ENCODE measurements at regions of chr12 and their contacts with region 1.

Region 1: GRCh38 chr12:114166362-114166761 is 200.2 kb upstream of the RBM19 start:
- DNase-seq: peak; percentile 29
- ATAC-seq: peak; percentile 71 to 74

Region 2: DNA sequence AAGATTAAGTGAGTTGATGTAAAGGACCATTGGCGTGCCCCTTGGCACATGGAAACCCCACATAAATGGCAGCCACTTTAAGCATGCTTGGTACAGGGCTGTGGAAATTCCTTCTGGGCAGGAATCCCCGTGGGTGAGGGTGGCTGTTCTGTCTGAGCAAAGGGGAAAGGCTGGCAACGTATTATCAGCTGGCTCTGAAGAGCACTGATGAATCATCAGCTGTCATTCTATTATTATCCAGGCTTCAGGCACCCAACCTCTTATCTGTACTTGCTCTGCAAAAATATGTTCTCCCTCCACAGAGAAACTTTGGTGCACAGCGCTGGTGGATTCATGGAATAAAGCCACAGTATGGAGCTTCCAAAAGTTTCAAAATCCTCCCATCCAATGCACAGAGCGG is 72.4 kb after region 1 on chr12:
- intact Hi-C with region 1: no loop called
- DNase-seq: peak; percentile 49
- ATAC-seq: peak; percentile 95 to 97

Region 3: DNA sequence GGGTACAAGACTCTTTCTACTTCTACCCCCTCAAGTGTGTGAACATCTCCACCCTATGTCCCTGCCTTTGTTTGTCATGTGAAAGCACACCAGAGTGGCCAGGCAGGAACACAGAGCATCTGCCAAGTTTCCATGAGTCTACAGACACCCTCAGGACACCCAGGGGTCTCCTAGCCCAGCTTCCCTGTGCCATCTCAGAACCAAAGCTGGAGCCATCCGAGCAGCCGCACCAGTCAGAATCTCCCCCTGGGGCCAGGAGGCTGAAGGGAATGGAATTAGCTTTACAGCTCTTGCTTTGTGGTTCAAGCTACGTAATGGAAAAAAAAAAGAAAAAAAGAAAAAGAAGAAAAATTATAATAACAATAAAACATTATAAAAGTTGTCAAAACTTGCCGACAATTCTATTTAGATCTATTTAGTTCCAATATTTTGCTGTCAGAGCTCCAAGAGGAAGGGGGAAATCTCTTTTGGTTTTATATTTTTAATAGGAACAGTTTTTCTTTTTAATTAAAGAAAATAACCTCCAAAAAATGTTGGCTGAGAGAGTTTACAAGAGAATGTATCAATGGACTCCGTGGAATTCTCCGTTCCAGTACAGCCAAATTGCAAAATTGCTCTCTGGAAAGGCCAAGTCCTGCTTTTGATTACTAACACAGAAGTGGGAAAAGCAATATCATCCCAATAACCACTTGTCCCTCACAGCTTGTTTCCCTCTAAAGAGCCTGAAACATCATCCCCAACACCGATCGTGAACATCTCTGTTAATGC is 202.5 kb after region 1 on chr12:
- intact Hi-C with region 1: loop called in 1 of 2 experiments (anchors 10 kb)
- DNase-seq: peak; percentile 34
- ATAC-seq: peak; percentile 47 to 56

Region 4: DNA sequence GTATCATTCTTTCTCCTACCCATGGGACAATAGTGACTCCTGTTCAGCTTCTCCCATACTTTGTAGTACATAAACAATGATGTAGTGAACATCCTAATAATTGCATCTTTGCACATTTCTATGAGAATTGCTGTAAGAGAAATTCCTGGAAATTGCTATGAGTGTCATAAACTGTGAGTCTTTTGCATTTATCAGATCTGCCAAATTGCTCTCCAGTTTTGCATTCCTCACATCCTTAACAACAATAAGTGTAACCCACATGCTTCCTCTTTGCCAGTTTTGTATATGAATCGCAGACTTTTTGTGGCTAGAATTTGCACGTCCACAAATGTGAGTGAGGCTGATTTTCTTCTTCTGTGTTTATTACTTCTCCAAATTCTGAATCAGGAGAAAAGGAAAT is 363.6 kb after region 1 on chr12:
- intact Hi-C with region 1: no loop called
- DNase-seq: no peak
- ATAC-seq: no peak